ENCODE measurements at regions of chr12 and their contacts with region 1.

Region 1: DNA sequence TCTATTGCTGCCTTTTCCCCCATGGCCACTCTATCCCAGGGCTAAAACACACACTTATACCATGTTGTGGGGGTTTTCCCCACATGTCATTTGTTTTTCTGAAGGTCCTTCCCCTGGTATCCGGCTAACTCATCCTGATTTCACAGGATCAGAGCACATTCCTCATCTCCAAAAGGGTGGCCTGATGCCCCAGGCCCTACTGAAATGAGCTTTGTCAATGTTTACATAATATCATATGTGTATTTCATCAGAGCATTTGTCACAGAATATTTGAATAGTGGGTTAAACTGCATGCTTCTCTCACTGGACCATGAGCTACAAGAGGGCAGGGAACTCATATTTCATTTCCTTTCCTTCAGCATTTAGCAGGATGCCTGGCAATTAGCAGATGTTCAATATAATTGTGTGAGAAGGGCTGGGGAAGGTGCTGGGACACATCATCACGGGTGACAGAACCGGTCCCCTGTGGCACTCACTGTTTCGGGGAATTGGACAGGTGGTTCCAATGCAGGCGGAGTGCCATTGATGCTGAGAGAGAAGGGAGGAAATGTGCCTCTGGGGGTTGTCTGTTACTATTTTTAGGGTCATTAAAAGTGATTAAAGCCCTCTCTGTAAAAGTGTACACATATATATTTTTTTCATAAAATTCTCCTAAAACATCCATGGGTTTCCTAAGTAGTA is 26.8 kb downstream of the EMP1 start:
- DNase-seq: no peak

Region 2: DNA sequence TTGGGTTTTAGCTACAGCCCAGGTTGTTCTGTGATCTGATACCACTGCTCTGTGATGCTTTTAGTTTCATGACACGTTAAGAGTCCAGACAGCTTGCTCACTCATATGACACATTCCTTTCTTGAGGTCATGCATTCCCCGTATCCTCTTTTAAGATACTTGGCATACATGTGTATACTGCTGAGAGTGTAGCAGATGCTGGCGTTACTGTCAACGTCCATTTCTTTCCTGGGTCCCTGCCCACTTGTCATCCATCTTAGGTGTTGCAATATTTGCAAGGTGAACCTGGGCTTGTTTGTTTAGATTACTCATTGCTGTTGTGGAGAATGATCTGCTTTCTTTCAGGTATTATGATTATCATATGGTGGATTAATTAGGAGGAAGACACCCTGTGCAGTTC is 35.9 kb before region 1 on chr12:
- intact Hi-C with region 1: no loop called
- DNase-seq: no peak

Region 3: GRCh38 chr12:13233830-13234641 is 10.7 kb after region 1 on chr12:
- intact Hi-C with region 1: loop called in 1 of 2 experiments (anchors 1 kb)
- DNase-seq: no peak

Region 4: GRCh38 chr12:13278249-13278787 is 55.0 kb after region 1 on chr12:
- intact Hi-C with region 1: no loop called
- DNase-seq: peak; percentile 92

Region 5: GRCh38 chr12:14913381-14913781 is 1690.1 kb after region 1 on chr12:
- intact Hi-C with region 1: loop called in 1 of 2 experiments (anchors 5 kb)
- DNase-seq: no peak